Mammary epithelial cell (primary cell): ENCODE measurements at regions of chr4 and their contacts with region 1.

Region 1: DNA sequence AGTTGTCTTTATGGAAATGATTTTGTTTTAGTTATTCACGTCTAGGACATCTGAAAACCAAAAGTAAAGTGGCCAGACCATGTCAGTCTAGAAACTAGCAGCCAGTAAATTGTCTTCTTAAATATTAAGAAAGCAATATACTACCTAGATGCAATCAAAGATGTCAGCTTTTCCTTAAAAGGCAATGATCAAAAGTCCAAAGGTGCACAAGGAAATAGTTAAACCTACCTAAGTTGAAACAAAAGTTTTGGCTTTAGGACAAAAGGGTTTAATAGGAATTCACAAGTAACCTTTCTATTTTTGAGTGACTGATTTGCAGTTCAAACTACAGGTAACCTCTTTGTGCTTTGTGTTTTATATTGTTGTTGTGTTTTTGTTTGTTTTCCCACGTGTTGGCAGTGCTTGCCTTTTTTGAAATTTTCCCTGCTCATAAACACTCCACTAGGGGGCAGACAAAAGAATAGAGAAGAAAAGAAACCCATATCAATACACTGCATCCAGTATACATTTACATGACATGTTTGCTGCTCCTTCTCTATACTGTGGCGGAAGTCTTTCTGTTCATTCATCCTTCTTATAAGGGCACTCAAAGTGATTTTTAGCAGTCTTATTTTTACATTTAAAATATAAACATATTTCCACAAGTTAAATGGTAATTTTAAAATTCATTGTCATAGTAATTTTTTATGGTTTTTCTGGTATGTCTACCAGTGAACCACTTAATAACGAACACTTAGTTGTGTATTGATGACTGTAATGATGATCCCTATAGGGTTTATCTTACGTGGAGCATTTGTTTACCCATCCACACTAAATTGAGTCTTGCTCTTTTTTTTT is 62.7 kb downstream of the GAB1 start:
- DNase-seq: peak; percentile 17
- H3K4me3 ChIP-seq: no peak overlapping the region
- H3K27ac ChIP-seq: no peak overlapping the region
- H3K4me1 ChIP-seq: no peaks in the 10 kb centered on the region
- H3K27me3 ChIP-seq: no peaks in the 10 kb centered on the region
- CTCF ChIP-seq: peak; percentile 68 to 71

Region 2: GRCh38 chr4:143443728-143444127 is 44.4 kb after region 1 on chr4:
- CTCF ChIA-PET with region 1: interaction called, 12 read pairs
- dilution Hi-C with region 1: no loop called
- in situ Hi-C with region 1: no loop called
- intact Hi-C with region 1: no loop called
- DNase-seq: no peak
- H3K4me3 ChIP-seq: no peak overlapping the region
- H3K27ac ChIP-seq: no peak overlapping the region
- H3K4me1 ChIP-seq: no peaks in the 10 kb centered on the region
- H3K27me3 ChIP-seq: no peaks in the 10 kb centered on the region
- CTCF ChIP-seq: no peak